ENCODE measurements at regions of chr3 and their contacts with region 1.

Region 1: GRCh38 chr3:143121241-143122088 is 1.9 kb downstream of the CHST2 start:
- DNase-seq: peak in 9 of 10 donors; percentile 24 to 74 (median 63)
- H3K4me3 ChIP-seq: peak overlapping the region; percentile 56 to 95 (median 83)
- H3K27ac ChIP-seq: peak overlapping the region in 8 of 59 donors; percentile 33 to 85 (median 76)
- H3K27me3 ChIP-seq: peaks cover 0 to 3% (median 0%) of the 10 kb centered on the region in 45 donors
- CTCF ChIP-seq: peak in 53 of 56 donors; percentile 15 to 74 (median 47)

Region 2: DNA sequence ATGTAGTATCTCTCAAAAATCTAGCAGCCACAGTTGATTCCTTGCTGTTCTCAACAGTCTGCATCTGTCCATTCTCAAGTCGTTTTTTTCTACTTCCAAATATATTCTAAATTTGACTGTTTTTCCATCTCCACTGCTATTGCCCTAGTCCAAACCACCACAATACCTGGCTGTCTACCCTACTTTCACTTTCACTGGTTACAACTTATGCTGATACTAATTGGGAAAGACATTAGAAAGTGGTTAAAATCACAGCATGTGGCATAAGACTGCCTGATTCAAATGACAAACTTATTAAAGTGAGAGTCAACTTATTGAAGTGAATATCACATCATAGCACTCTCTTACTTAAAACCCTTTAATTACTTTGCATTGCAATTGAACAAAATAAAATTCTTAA is 70.7 kb after region 1 on chr3:
- intact Hi-C with region 1: no loop called
- DNase-seq: no peak
- H3K4me3 ChIP-seq: no peak overlapping the region
- H3K27ac ChIP-seq: no peak overlapping the region
- H3K27me3 ChIP-seq: peaks cover 0 to 3% (median 0%) of the 10 kb centered on the region in 45 donors
- CTCF ChIP-seq: no peak

Region 3: DNA sequence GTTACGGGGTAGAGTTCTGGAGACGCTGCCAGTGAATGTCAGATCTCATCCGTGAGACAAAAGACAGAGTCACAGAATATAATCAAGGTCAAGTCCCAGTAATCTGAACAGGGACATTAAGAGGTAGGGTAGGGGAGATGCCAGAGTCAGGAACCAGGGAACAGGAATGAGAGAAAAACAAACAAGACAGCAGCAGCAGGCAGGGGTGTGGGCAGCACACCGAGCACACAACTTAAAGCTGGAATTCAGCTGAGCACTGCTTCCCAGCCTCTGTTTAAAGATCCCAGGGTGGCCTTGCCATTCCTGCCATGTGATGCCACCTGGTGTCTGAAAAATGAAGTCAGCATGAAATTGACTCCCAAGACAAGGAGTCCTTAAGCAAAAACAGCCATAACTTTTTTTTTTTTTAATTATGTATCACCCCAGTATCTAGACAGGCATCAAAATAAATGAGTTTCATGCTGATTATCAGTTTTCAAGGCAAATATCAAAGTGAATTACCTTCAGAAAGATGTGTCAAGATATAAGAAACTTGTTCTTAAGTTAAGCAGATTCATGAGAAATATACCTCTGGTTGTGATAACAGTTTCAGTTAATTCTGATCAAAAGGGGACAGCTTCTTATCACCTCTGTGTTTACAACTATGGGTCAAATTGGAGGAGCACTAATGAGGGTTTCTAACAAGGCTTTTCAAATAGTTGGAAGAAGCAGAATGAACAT is 523.1 kb after region 1 on chr3:
- intact Hi-C with region 1: loop called in 1 of 2 experiments (anchors 5 kb)
- DNase-seq: peak in 8 of 10 donors; percentile 6 to 61 (median 42)
- H3K4me3 ChIP-seq: no peak overlapping the region
- H3K27ac ChIP-seq: no peak overlapping the region
- H3K27me3 ChIP-seq: no peaks in the 10 kb centered on the region
- CTCF ChIP-seq: peak; percentile 31 to 74 (median 63)

Region 4: DNA sequence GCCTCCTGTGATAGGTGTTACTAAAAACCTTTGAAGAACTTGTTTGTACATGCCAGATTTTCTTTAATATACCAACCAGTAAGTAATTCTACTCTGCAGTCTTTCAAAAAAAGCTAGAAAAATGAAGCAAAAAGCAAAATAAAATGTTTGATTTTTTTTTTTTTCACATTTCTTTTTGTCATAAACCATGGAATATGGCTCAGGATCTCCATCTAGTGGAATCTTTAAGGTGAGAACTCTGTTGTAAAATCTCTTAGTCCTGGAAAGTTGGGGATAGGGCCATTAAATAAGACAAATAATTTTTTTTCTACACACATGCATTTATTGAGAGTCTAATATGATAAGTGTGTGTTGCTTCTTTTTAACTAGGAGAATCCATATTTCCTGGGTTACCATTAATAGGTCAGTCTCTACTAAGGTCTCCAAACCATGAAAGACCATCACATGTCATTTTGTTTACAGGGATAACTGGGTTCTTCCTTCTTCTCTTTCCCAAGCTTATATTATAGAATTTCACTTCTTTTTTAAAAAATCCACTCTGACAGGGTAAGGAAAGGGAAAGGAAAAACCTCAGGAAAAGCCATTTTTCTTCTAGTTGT is 642.2 kb after region 1 on chr3:
- intact Hi-C with region 1: loop called in 1 of 2 experiments (anchors 5 kb)
- DNase-seq: no peak
- H3K4me3 ChIP-seq: no peak overlapping the region
- H3K27ac ChIP-seq: no peak overlapping the region
- H3K27me3 ChIP-seq: no peaks in the 10 kb centered on the region
- CTCF ChIP-seq: peak in 54 of 56 donors; percentile 39 to 72 (median 56)